ENCODE measurements at regions of chr1 and their contacts with region 1.

Region 1: GRCh38 chr1:2786329-2787162 is 14.9 kb downstream of the TTC34 start:
- DNase-seq: peak; percentile 50 to 70 (median 66)
- ATAC-seq: peak; percentile 91
- H3K4me3 ChIP-seq: no peak overlapping the region
- H3K27ac ChIP-seq: no peak overlapping the region
- H3K4me1 ChIP-seq: no peaks in the 10 kb centered on the region; a peak in 1 of 5 replicates
- H3K27me3 ChIP-seq: no peaks in the 10 kb centered on the region
- CTCF ChIP-seq: peak; percentile 67 to 85 (median 69)
- EP300 ChIP-seq: no peak
- POLR2A ChIP-seq: no peak
- RAD21 ChIP-seq: peak; percentile 61 to 71

Region 2: DNA sequence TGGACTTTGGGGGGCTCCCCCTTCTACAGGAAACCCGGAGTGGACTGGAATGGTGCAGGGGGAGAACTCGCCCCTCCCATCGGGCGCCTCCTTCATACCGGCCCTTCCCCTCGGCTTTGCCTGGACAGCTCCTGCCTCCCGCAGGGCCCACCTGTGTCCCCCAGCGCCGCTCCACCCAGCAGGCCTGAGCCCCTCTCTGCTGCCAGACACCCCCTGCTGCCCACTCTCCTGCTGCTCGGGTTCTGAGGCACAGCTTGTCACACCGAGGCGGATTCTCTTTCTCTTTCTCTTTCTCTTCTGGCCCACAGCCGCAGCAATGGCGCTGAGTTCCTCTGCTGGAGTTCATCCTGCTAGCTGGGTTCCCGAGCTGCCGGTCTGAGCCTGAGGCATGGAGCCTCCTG is 230.3 kb before region 1 on chr1 and contains the start of gene TNFRSF14:
- CTCF ChIA-PET with region 1: interaction called, 22 read pairs
- POLR2A ChIA-PET with region 1: interaction called, 3 read pairs
- in situ Hi-C with region 1: no loop called
- intact Hi-C with region 1: no loop called
- DNase-seq: peak in 3 of 4 experiments; percentile 42 to 55 (median 52)
- ATAC-seq: peak; percentile 47
- H3K4me3 ChIP-seq: peak within 1 kb of the TSS; percentile 25
- H3K27ac ChIP-seq: peak within 1 kb of the TSS; percentile 51; the same call in 1 of the 3 replicates
- H3K4me1 ChIP-seq: peaks cover 26 to 82% of the 10 kb centered on the region in 2 experiments
- H3K27me3 ChIP-seq: 0 out of 5 replicates have a peak, but pooled peaks cover 0 to 4% of the 10 kb centered on the region in 2 experiments
- CTCF ChIP-seq: no peak
- EP300 ChIP-seq: no peak
- POLR2A ChIP-seq: no peak; the same call in 1 of the 2 replicates
- RAD21 ChIP-seq: no peak
- polyA plus RNA-seq, gene TNFRSF14: not detected

Region 3: GRCh38 chr1:2650967-2651645 is 135.4 kb before region 1 on chr1:
- CTCF ChIA-PET with region 1: no interaction called
- POLR2A ChIA-PET with region 1: no interaction called
- in situ Hi-C with region 1: loop called (anchors 10 kb)
- intact Hi-C with region 1: no loop called
- DNase-seq: no peak
- ATAC-seq: no peak
- H3K4me3 ChIP-seq: no peak overlapping the region
- H3K27ac ChIP-seq: no peak overlapping the region
- H3K4me1 ChIP-seq: peaks cover 0 to 25% of the 10 kb centered on the region in 2 experiments; a peak in 1 of 5 replicates
- H3K27me3 ChIP-seq: no peaks in the 10 kb centered on the region; a peak in 1 of 5 replicates
- CTCF ChIP-seq: no peak
- EP300 ChIP-seq: no peak
- POLR2A ChIP-seq: no peak
- RAD21 ChIP-seq: no peak

Measured in K562 (cell line).